CD4-positive, alpha-beta T cell (primary cell): ENCODE measurements at regions of chr7 and their contacts with region 1.

Region 1: GRCh38 chr7:154996752-154997151 is 6.2 kb downstream of the PAXIP1 start:
- DNase-seq: no peak
- ATAC-seq: no peak
- H3K4me3 ChIP-seq: no peak overlapping the region
- H3K4me3 Mint-ChIP-seq: no peak overlapping the region
- H3K27ac ChIP-seq: no peak overlapping the region
- H3K27ac Mint-ChIP-seq: no peak overlapping the region
- H3K4me1 ChIP-seq: peaks cover 3% of the 10 kb centered on the region
- H3K4me1 Mint-ChIP-seq: peaks cover 15% of the 10 kb centered on the region
- H3K27me3 ChIP-seq: no peaks in the 10 kb centered on the region
- H3K27me3 Mint-ChIP-seq: no peaks in the 10 kb centered on the region
- CTCF ChIP-seq: no peak

Region 2: DNA sequence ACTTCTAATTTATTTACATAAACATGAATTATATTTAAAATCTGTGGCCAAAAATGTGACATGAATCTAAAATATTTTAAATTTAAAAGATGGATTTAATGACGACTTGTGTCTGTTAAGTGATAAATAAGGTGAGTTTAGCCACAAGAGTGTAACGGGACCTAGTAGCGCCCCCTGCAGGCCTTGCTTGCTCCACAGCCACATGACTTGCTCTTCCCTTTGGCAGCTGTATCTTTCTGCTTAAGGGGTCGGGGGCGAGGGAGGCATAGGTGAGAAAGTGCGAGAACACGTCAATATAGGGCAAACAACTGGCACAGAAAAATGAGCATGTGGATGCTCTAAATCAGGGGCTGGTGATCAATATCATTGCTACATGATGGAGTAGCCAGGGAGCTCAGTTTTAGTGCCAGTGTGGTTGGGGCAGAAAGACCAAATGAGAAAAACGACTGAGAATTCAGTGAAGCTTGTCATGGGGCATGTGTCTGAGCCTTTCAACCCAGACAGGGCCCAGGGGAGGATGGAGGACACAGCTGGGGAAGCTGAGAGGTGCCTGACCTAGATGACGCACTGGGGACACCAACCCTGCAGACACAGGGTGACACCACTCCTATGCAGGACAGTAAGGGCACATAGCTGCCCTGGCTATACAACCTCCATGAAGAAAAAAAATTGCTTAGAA is 43.6 kb before region 1 on chr7:
- CTCF ChIA-PET with region 1: interaction called, 4 read pairs
- POLR2A ChIA-PET with region 1: interaction called, 4 read pairs
- intact Hi-C with region 1: loop called (anchors 5 to 10 kb)
- DNase-seq: peak; percentile 58 to 83 (median 65)
- ATAC-seq: peak; percentile 62
- H3K4me3 ChIP-seq: no peak overlapping the region
- H3K4me3 Mint-ChIP-seq: no peak overlapping the region
- H3K27ac ChIP-seq: no peak overlapping the region
- H3K27ac Mint-ChIP-seq: no peak overlapping the region
- H3K4me1 ChIP-seq: no peaks in the 10 kb centered on the region
- H3K4me1 Mint-ChIP-seq: no peaks in the 10 kb centered on the region
- H3K27me3 ChIP-seq: no peaks in the 10 kb centered on the region
- H3K27me3 Mint-ChIP-seq: no peaks in the 10 kb centered on the region
- CTCF ChIP-seq: peak; percentile 67